A673 (cell line): ENCODE measurements at regions of chr2 and their contacts with region 1.

Region 1: GRCh38 chr2:65638443-65638842 is 206.0 kb upstream of the SPRED2 start:
- DNase-seq: peak; percentile 77
- H3K4me3 ChIP-seq: no peak overlapping the region
- H3K27ac ChIP-seq: peak overlapping the region; percentile 84
- H3K4me1 ChIP-seq: peaks cover 60% of the 10 kb centered on the region
- H3K27me3 ChIP-seq: no peaks in the 10 kb centered on the region
- CTCF ChIP-seq: peak; percentile 46

Region 2: DNA sequence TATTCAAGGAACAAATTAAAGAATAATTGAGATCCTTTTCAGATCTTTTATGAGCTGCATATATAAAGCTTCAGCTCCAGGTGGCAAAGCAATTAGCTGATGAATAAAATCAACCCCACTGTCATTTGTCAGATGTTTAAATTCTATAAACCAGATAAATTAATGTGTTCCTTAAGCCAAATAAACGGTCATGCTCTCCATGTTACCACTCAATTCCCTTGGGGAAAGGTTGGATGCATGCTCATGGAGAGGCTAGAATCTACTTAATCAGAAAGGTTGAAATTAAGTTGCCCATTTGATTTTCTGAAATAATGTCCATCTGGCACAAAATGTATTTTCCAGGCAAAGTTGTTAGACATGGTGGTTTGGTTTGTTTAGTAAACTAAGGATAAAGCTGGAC is 76.4 kb after region 1 on chr2:
- CTCF ChIA-PET with region 1: interaction called, 4 read pairs
- POLR2A ChIA-PET with region 1: interaction called, 4 read pairs
- intact Hi-C with region 1: loop called (anchors 5 kb)
- DNase-seq: peak; percentile 37
- H3K4me3 ChIP-seq: no peak overlapping the region
- H3K27ac ChIP-seq: no peak overlapping the region
- H3K4me1 ChIP-seq: peaks cover 40% of the 10 kb centered on the region
- H3K27me3 ChIP-seq: no peaks in the 10 kb centered on the region
- CTCF ChIP-seq: no peak

Region 3: DNA sequence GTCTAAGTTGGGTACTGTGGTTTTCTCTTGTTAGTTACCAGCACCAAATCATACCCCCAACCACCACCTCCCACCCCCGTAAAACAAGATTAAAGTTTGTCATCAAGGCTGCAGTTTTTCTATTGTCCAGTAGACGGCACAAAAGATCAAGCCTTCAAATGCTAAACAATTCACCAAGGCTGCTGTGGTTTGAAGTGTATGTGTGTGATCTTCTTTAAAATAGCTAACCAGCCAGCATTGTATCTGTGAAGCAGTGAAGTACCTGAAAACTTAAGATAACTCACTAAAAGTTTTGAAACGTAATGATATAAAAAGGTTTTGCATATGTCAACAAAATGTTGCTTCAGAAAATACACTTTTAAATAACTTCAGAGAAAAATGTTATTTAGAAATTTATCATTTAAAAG is 790.6 kb after region 1 on chr2:
- CTCF ChIA-PET with region 1: no interaction called
- POLR2A ChIA-PET with region 1: no interaction called
- intact Hi-C with region 1: loop called (anchors 2 kb)
- DNase-seq: peak; percentile 87
- H3K4me3 ChIP-seq: no peak overlapping the region
- H3K27ac ChIP-seq: peak overlapping the region; percentile 77
- H3K4me1 ChIP-seq: peaks cover 63% of the 10 kb centered on the region
- H3K27me3 ChIP-seq: no peaks in the 10 kb centered on the region
- CTCF ChIP-seq: peak; percentile 94